Activated CD4-positive, alpha-beta T cell treated with anti-CD3 and anti-CD28 coated beads, Interleukin-2, amount 10 ng/mL, durations not matched to agents 7 days and 5 days (primary cell): ENCODE measurements at regions of chr18 and their contacts with region 1.

Region 1: GRCh38 chr18:48252525-48252924 is 156.7 kb downstream of the ZBTB7C start:
- DNase-seq: no peak
- H3K4me3 Mint-ChIP-seq: no peak overlapping the region
- H3K27ac Mint-ChIP-seq: no peak overlapping the region
- H3K4me1 Mint-ChIP-seq: no peaks in the 10 kb centered on the region
- H3K27me3 Mint-ChIP-seq: peaks cover 42% of the 10 kb centered on the region

Region 2: GRCh38 chr18:48193541-48194492 is 58.7 kb before region 1 on chr18:
- CTCF ChIA-PET with region 1: no interaction called
- POLR2A ChIA-PET with region 1: interaction called, 11 read pairs
- DNase-seq: no peak
- H3K4me3 Mint-ChIP-seq: no peak overlapping the region
- H3K27ac Mint-ChIP-seq: no peak overlapping the region
- H3K4me1 Mint-ChIP-seq: no peaks in the 10 kb centered on the region
- H3K27me3 Mint-ChIP-seq: peaks cover 26% of the 10 kb centered on the region

Region 3: DNA sequence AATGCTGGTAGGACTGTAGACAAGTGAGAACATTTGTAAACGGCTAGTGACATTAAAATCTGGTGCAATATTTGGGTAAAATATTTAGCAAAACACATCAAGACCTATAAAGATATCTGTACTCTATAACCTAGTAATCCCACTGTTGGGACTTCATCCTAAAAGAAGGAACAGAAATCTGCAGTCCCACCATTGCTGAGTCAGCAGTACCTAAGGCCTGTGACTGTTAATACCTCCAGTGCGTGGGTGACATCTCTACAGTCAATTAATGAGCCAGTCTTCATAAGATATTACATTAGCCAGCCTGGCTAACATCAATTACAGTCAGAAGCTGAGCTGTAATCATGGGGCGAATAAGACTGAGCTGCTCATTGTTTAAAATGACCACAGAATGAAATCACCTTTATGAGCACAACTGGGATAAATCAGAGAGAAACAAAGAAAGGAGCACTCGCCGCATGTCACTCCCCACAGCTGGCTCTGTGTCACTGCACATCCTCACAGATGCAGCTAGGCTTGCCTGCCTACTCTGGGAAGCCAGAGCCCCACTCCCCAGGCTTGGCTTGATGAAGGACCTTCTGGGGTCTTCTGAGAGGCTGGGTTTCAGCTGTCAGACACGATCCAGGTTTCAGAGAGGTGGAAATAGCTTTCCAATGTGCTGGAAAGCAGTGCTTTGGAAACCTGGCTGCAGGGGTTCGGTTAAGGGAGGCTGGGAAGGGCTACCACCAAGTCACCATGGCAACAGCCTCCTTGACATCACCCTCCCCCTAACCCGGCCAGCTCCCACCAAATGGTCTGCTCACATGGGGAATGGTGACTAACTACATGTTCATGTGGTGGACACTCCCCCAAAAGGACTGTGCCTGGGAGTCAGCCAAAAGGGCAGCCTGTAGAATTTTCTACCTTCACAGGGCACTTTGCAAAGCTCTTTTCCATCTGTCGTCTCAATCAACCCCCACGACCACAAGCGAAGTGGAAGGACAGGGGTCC is 11.7 kb after region 1 on chr18:
- CTCF ChIA-PET with region 1: no interaction called
- POLR2A ChIA-PET with region 1: no interaction called
- DNase-seq: no peak
- H3K4me3 Mint-ChIP-seq: no peak overlapping the region
- H3K27ac Mint-ChIP-seq: no peak overlapping the region
- H3K4me1 Mint-ChIP-seq: no peaks in the 10 kb centered on the region
- H3K27me3 Mint-ChIP-seq: peaks cover 8% of the 10 kb centered on the region